MCF 10A (cell line): ENCODE measurements at regions of chr10 and their contacts with region 1.

Region 1: GRCh38 chr10:119686439-119687191 is 35.4 kb downstream of the BAG3 start:
- DNase-seq: peak; percentile 93
- H3K4me3 Mint-ChIP-seq: peak overlapping the region; percentile 71
- H3K27ac Mint-ChIP-seq: peak overlapping the region; percentile 82
- H3K4me1 Mint-ChIP-seq: peaks cover 20% of the 10 kb centered on the region
- H3K27me3 Mint-ChIP-seq: no peaks in the 10 kb centered on the region
- CTCF ChIP-seq: peak; percentile 95

Region 2: DNA sequence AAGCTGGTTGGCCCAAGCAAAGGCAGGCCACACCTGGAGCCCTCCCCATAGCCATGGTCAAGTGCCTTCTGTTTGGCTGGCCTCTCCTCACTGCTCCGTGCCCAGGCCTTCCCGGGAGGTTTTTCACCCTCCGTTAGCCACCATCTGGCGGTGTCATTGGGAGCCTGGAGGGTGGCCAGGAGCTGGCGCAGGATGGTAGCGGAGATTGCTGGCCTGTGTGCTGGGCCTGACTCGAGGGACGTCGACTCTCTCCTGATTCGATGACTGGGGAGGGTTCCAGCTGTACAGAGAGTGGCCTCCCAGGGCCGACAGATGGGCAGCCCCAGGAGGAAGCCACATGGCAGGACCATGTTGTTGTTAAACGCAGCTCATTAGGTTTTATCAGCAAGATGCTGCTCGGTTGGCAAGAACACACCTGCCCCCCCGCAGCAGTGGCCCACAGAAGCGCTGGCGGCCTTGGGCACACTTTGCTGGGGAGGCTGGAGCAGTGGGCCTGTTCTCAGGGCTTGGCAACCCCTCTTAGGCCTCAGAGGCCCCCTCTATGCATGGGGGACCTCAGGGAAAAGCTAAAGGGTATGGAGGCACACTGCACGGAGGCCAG is 867.9 kb before region 1 on chr10:
- CTCF ChIA-PET with region 1: no interaction called
- POLR2A ChIA-PET with region 1: no interaction called
- intact Hi-C with region 1: no loop called
- DNase-seq: no peak
- H3K4me3 Mint-ChIP-seq: no peak overlapping the region
- H3K27ac Mint-ChIP-seq: no peak overlapping the region
- H3K4me1 Mint-ChIP-seq: peaks cover 6% of the 10 kb centered on the region
- H3K27me3 Mint-ChIP-seq: no peaks in the 10 kb centered on the region
- CTCF ChIP-seq: no peak

Region 3: GRCh38 chr10:119608316-119609155 is 78.1 kb before region 1 on chr10:
- CTCF ChIA-PET with region 1: interaction called, 15 read pairs
- POLR2A ChIA-PET with region 1: interaction called, 5 read pairs
- intact Hi-C with region 1: loop called (anchors 2 kb)
- DNase-seq: peak; percentile 66
- H3K4me3 Mint-ChIP-seq: no peak overlapping the region
- H3K27ac Mint-ChIP-seq: no peak overlapping the region
- H3K4me1 Mint-ChIP-seq: peaks cover 5% of the 10 kb centered on the region
- H3K27me3 Mint-ChIP-seq: no peaks in the 10 kb centered on the region
- CTCF ChIP-seq: peak; percentile 58

Region 4: GRCh38 chr10:119667562-119668328 is 18.9 kb before region 1 on chr10:
- CTCF ChIA-PET with region 1: interaction called, 6 read pairs
- POLR2A ChIA-PET with region 1: interaction called, 752 read pairs
- intact Hi-C with region 1: no loop called
- DNase-seq: peak; percentile 98
- H3K4me3 Mint-ChIP-seq: peak overlapping the region; percentile 59
- H3K27ac Mint-ChIP-seq: peak overlapping the region; percentile 93
- H3K4me1 Mint-ChIP-seq: peaks cover 54% of the 10 kb centered on the region
- H3K27me3 Mint-ChIP-seq: no peaks in the 10 kb centered on the region
- CTCF ChIP-seq: no peak

Region 5: GRCh38 chr10:119725828-119726675 is 39.4 kb after region 1 on chr10 and contains the start of gene INPP5F:
- CTCF ChIA-PET with region 1: interaction called, 15 read pairs
- POLR2A ChIA-PET with region 1: interaction called, 116 read pairs
- intact Hi-C with region 1: loop called (anchors 1 kb)
- DNase-seq: peak; percentile 98
- H3K4me3 Mint-ChIP-seq: peak within 1 kb of the TSS; percentile 82
- H3K27ac Mint-ChIP-seq: peak within 1 kb of the TSS; percentile 76
- H3K4me1 Mint-ChIP-seq: peaks cover 45% of the 10 kb centered on the region
- H3K27me3 Mint-ChIP-seq: no peaks in the 10 kb centered on the region
- CTCF ChIP-seq: peak; percentile 5
- total RNA-seq, gene INPP5F: 10.3 and 14.9 TPM in 2 replicates

Region 6: GRCh38 chr10:119859420-119860258 is 173.0 kb after region 1 on chr10:
- CTCF ChIA-PET with region 1: interaction called, 30 read pairs
- POLR2A ChIA-PET with region 1: interaction called, 12 read pairs
- intact Hi-C with region 1: loop called (anchors 1 kb)
- DNase-seq: peak; percentile 63
- H3K4me3 Mint-ChIP-seq: no peak overlapping the region
- H3K27ac Mint-ChIP-seq: peak overlapping the region; percentile 35
- H3K4me1 Mint-ChIP-seq: peaks cover 23% of the 10 kb centered on the region
- H3K27me3 Mint-ChIP-seq: no peaks in the 10 kb centered on the region
- CTCF ChIP-seq: peak; percentile 38

Region 7: DNA sequence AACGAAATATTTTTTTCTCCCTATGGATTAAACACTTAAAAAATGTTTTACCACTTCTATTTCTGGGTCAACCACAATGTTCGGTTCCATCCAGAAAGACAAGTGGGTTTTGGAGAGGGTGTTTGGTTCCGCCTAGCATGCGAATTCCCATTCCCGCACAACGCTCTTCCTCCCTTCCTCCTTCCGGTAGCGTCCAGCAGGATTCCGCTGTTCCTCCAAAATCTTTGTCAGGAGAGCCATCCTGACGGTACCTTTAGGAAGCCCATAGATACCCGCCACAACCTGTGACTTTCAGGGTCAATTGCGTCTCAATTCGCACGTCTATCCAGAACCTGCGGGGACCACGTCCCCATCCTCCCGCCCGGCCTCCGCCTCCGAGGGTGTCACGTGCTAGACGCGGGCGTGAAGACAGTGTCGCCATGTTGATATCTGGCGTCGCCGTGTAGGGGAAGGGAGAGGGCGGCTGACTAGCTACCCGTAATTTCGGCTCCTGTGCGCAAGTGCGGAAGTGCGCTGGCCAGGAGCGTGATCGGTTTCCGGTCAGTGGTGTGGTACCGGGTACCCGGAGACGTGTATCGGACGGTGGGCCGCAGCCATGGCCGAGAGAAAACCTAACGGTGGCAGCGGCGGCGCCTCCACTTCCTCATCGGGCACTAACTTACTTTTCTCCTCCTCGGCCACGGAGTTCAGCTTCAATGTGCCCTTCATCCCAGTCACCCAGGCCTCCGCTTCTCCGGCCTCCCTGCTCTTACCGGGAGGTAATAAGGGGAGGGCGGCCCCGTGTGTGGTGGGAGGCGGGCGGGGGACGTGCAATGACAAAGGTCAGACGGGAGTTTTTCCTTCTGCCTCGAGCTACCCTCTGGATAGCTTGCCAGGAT is 205.8 kb after region 1 on chr10 and contains the start of gene SEC23IP:
- CTCF ChIA-PET with region 1: interaction called, 9 read pairs
- POLR2A ChIA-PET with region 1: interaction called, 6 read pairs
- intact Hi-C with region 1: loop called (anchors 10 kb)
- DNase-seq: peak; percentile 96
- H3K4me3 Mint-ChIP-seq: peak within 1 kb of the TSS; percentile 91
- H3K27ac Mint-ChIP-seq: peak within 1 kb of the TSS; percentile 88
- H3K4me1 Mint-ChIP-seq: peaks cover 43% of the 10 kb centered on the region
- H3K27me3 Mint-ChIP-seq: no peaks in the 10 kb centered on the region
- CTCF ChIP-seq: no peak
- total RNA-seq, gene SEC23IP: 60.5 and 64.9 TPM in 2 replicates